ENCODE measurements at regions of chr3 and their contacts with region 1.

Region 1: GRCh38 chr3:45210308-45211041 is 15.6 kb downstream of the TMEM158 start:
- DNase-seq: peak; percentile 88
- ATAC-seq: peak; percentile 92
- H3K4me3 Mint-ChIP-seq: no peak overlapping the region
- H3K27ac Mint-ChIP-seq: peak overlapping the region; percentile 0
- H3K4me1 Mint-ChIP-seq: peaks cover 39% of the 10 kb centered on the region
- H3K27me3 Mint-ChIP-seq: peaks cover 24% of the 10 kb centered on the region

Region 2: DNA sequence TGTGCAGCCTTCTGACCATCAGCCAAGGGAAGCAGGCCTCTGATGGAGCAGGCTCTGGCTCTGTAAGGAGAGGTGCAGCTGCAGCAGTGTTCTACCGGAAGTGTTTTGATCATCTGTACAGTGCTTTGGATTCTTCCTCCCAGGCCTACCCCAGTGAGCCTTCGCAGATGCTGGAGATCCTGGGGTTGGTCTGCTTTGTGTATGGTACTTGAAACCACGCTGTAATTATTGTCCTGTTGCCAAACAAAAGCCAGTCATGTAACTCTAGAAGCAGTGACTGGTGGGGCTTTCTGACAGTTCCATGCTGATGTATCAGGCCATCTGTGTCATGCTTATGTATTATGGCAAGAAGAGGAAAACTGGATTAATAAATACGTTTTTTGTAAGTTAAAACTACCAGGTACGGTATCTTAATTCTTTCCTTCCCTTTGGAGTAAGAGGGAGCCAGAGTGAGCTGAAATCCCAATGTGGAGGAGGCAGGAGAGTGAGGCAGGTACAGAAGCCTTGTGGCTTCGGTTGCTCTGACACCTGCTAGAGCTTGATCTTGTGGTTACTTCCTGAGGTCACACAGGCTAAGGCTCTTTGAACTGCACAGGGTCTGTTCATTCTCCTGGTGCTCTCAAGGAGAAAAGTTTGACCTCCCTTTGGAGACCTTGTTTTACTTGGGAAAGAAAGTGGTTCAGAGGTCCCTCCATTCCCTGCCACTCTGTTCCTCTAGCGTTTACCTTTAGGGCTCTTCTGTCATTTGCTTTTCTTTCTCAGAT is 345.0 kb before region 1 on chr3:
- CTCF ChIA-PET with region 1: no interaction called
- POLR2A ChIA-PET with region 1: no interaction called
- DNase-seq: peak; percentile 47
- ATAC-seq: no peak
- H3K4me3 Mint-ChIP-seq: peak overlapping the region; percentile 43
- H3K27ac Mint-ChIP-seq: peak overlapping the region; percentile 74
- H3K4me1 Mint-ChIP-seq: peaks cover 42% of the 10 kb centered on the region
- H3K27me3 Mint-ChIP-seq: no peaks in the 10 kb centered on the region

Region 3: GRCh38 chr3:45055411-45056143 is 154.9 kb before region 1 on chr3:
- CTCF ChIA-PET with region 1: interaction called, 36 read pairs
- POLR2A ChIA-PET with region 1: interaction called, 3 read pairs
- DNase-seq: peak; percentile 49
- ATAC-seq: no peak
- H3K4me3 Mint-ChIP-seq: no peak overlapping the region
- H3K27ac Mint-ChIP-seq: no peak overlapping the region
- H3K4me1 Mint-ChIP-seq: peaks cover 19% of the 10 kb centered on the region
- H3K27me3 Mint-ChIP-seq: peaks cover 18% of the 10 kb centered on the region

Region 4: GRCh38 chr3:45119824-45120614 is 90.5 kb before region 1 on chr3:
- CTCF ChIA-PET with region 1: interaction called, 25 read pairs
- POLR2A ChIA-PET with region 1: interaction called, 3 read pairs
- DNase-seq: no peak
- ATAC-seq: no peak
- H3K4me3 Mint-ChIP-seq: no peak overlapping the region
- H3K27ac Mint-ChIP-seq: peak overlapping the region; percentile 37
- H3K4me1 Mint-ChIP-seq: peaks cover 67% of the 10 kb centered on the region
- H3K27me3 Mint-ChIP-seq: peaks cover 20% of the 10 kb centered on the region

Region 5: DNA sequence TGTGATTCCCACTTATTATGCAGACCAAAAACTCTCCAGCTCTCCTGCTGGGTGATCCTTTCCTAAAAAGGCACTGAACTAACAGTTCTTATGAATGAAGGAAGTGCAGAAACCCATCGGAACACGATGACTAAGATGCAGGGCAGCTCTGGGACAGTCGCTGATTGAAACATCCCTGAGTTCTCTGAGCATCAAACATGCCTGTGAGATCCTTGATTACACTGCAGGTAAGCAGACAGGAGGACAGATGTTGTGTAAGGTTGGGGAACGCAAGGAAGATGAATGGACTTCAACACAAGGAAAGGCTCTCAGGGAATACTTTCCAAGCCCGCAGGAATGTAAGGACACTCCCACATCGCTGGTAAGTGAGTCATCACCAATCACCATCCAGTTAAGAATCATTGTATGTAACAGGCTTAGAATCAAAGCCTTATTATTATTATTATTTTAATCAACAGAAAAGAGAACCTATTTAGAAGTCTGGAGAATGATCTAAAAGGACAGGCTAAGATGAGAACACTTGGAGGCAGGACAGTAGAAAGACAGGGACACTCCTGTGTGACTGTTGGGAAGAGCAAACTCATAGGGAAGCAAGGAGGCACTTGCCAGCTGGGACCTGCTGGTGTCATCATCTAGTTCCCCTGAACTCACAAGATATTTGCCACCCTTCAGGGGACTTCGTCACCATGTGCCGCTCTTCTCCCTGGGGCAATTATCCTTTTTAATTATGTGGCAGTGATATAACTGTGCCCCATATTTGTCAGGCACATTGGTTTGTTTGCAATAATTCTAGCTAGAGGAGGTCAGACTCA is 10.4 kb before region 1 on chr3:
- CTCF ChIA-PET with region 1: interaction called, 28 read pairs
- POLR2A ChIA-PET with region 1: no interaction called
- DNase-seq: no peak
- ATAC-seq: no peak
- H3K4me3 Mint-ChIP-seq: no peak overlapping the region
- H3K27ac Mint-ChIP-seq: no peak overlapping the region
- H3K4me1 Mint-ChIP-seq: peaks cover 4% of the 10 kb centered on the region
- H3K27me3 Mint-ChIP-seq: peaks cover 57% of the 10 kb centered on the region

Region 6: DNA sequence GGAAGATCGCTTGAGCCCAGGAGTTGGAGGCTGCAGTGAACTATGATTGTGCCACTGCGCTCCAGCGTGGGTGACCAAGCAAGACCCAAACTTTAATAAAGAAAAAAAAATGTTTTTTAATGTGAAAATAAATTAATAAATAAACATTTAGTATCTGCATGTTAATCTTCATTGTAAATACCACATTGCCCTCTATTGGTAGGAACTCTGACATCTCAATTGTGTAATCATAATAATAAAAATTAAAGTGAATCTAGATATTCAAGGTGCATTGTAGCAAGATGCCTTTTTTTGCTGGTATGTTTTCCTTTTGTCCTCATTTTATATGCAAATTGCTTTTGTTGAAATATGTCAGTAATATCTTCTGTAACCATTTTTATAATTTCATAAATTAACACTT is 289.1 kb after region 1 on chr3:
- CTCF ChIA-PET with region 1: interaction called, 10 read pairs
- POLR2A ChIA-PET with region 1: no interaction called
- DNase-seq: no peak
- ATAC-seq: no peak
- H3K4me3 Mint-ChIP-seq: no peak overlapping the region
- H3K27ac Mint-ChIP-seq: no peak overlapping the region
- H3K4me1 Mint-ChIP-seq: peaks cover 23% of the 10 kb centered on the region
- H3K27me3 Mint-ChIP-seq: no peaks in the 10 kb centered on the region

Region 7: GRCh38 chr3:45516829-45517228 is 306.4 kb after region 1 on chr3:
- CTCF ChIA-PET with region 1: no interaction called
- POLR2A ChIA-PET with region 1: no interaction called
- DNase-seq: no peak
- ATAC-seq: no peak
- H3K4me3 Mint-ChIP-seq: no peak overlapping the region
- H3K27ac Mint-ChIP-seq: no peak overlapping the region
- H3K4me1 Mint-ChIP-seq: no peaks in the 10 kb centered on the region
- H3K27me3 Mint-ChIP-seq: no peaks in the 10 kb centered on the region

Region 8: DNA sequence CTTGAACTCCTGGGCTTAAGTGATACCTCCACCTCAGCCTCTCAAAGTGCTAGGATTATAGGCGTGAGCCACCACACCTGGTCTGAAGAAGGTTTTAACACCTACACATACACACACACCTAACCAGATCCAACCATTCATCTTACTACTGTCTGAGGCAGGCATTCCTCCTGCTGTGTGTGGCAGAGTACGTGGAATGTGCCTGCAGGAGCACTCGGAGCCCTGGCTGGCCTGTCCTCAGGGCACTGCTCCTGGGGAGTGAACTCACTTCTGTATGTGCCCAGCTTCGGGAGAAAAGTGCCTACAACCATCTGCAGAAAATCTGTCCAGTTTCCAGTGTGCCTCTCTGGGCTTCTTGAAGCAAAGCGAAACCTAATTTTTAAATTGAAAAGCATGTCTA is 325.9 kb after region 1 on chr3:
- CTCF ChIA-PET with region 1: no interaction called
- POLR2A ChIA-PET with region 1: no interaction called
- DNase-seq: no peak
- ATAC-seq: no peak
- H3K4me3 Mint-ChIP-seq: no peak overlapping the region
- H3K27ac Mint-ChIP-seq: no peak overlapping the region
- H3K4me1 Mint-ChIP-seq: no peaks in the 10 kb centered on the region
- H3K27me3 Mint-ChIP-seq: no peaks in the 10 kb centered on the region